Mammary epithelial cell (primary cell): ENCODE measurements at regions of chr3 and their contacts with region 1.

Region 1: GRCh38 chr3:24264748-24265158 is 229.9 kb downstream of the THRB start:
- DNase-seq: peak; percentile 29
- H3K4me3 ChIP-seq: no peak overlapping the region
- H3K27ac ChIP-seq: no peak overlapping the region
- H3K4me1 ChIP-seq: no peaks in the 10 kb centered on the region
- H3K27me3 ChIP-seq: no peaks in the 10 kb centered on the region
- CTCF ChIP-seq: peak; percentile 71 to 82

Region 2: GRCh38 chr3:23991683-23992628 is 272.8 kb before region 1 on chr3:
- CTCF ChIA-PET with region 1: no interaction called
- dilution Hi-C with region 1: no loop called
- in situ Hi-C with region 1: no loop called
- intact Hi-C with region 1: no loop called
- DNase-seq: peak; percentile 12
- H3K4me3 ChIP-seq: no peak overlapping the region
- H3K27ac ChIP-seq: no peak overlapping the region
- H3K4me1 ChIP-seq: no peaks in the 10 kb centered on the region
- H3K27me3 ChIP-seq: no peaks in the 10 kb centered on the region
- CTCF ChIP-seq: no peak

Region 3: GRCh38 chr3:24318668-24319287 is 54.0 kb after region 1 on chr3:
- CTCF ChIA-PET with region 1: no interaction called
- dilution Hi-C with region 1: no loop called
- in situ Hi-C with region 1: no loop called
- intact Hi-C with region 1: loop called (anchors 10 kb)
- DNase-seq: peak; percentile 82
- H3K4me3 ChIP-seq: no peak overlapping the region
- H3K27ac ChIP-seq: peak overlapping the region; percentile 66
- H3K4me1 ChIP-seq: peaks cover 23% of the 10 kb centered on the region
- H3K27me3 ChIP-seq: no peaks in the 10 kb centered on the region
- CTCF ChIP-seq: no peak

Region 4: GRCh38 chr3:24365194-24365612 is 100.5 kb after region 1 on chr3:
- CTCF ChIA-PET with region 1: interaction called, 6 read pairs
- dilution Hi-C with region 1: no loop called
- in situ Hi-C with region 1: no loop called
- intact Hi-C with region 1: loop called (anchors 2 kb)
- DNase-seq: peak; percentile 91
- H3K4me3 ChIP-seq: no peak overlapping the region
- H3K27ac ChIP-seq: peak overlapping the region; percentile 48
- H3K4me1 ChIP-seq: peaks cover 7% of the 10 kb centered on the region
- H3K27me3 ChIP-seq: no peaks in the 10 kb centered on the region
- CTCF ChIP-seq: peak in 1 of 2 donors; percentile 42